Activated naive CD4-positive, alpha-beta T cell treated with anti-CD3 and anti-CD28 coated beads, Interleukin-2, amount 10 ng/mL, durations not matched to agents 7 days and 5 days (primary cell): ENCODE measurements at regions of chr15 and their contacts with region 1.

Region 1: DNA sequence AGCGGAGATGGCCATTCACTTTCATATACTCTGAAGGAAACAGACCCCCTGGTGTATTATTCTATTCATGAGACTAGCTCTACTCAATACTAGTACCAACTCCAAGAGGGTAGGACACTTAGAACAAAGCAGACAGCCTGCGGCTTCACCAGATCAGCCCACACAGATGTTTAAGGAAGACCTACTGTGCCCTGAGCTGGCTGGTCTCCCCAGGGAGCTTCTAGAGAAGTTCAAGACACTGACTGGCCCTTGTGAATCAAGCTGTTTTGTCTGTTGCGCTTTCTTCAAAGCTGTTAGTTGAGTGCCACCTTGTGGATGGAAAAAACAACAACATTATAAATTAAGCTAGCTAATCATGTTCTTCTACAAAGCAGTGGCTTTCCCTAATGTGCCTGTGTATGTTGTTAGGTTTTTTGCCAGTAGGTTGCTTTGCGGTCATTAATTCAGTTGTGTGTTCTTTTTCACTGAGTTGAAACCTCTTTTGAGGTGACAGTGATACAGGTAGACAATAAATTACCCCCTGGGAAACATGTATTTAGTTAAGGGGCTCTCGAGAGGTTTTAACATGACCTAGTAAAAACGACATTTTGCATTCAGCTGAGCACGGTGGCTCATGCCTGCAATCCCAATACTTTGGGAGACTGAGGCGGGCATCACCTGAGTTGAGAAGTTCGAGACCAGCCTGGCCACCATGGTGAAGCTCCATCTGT is 64.2 kb upstream of the MYZAP start:
- DNase-seq: peak; percentile 24
- H3K4me3 Mint-ChIP-seq: no peak overlapping the region
- H3K27ac Mint-ChIP-seq: no peak overlapping the region
- H3K4me1 Mint-ChIP-seq: no peaks in the 10 kb centered on the region
- H3K27me3 Mint-ChIP-seq: peaks cover 35% of the 10 kb centered on the region

Region 2: DNA sequence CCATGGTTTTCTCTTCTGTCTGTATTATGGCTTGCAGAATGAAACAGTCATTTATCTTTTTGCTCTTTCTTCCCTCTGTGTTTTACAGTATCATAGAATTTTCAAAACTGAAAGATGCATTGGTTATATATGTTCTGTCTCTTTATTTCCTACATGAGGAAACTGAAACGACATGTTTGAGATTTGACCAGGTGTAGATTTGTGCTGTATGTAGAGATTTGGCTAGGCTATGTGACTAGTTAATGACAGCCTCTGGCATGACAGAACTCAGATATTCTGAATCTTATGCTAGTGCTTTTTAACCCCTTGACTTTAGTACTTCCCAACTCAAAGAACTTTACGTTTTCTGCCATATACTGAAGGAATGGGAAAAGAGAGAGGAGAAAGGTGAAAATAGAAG is 458.1 kb before region 1 on chr15:
- CTCF ChIA-PET with region 1: no interaction called
- DNase-seq: no peak
- H3K4me3 Mint-ChIP-seq: no peak overlapping the region
- H3K27ac Mint-ChIP-seq: no peak overlapping the region
- H3K4me1 Mint-ChIP-seq: no peaks in the 10 kb centered on the region
- H3K27me3 Mint-ChIP-seq: no peaks in the 10 kb centered on the region

Region 3: GRCh38 chr15:57340682-57341259 is 186.8 kb before region 1 on chr15:
- CTCF ChIA-PET with region 1: interaction called, 93 read pairs
- DNase-seq: peak; percentile 51
- H3K4me3 Mint-ChIP-seq: no peak overlapping the region
- H3K27ac Mint-ChIP-seq: no peak overlapping the region
- H3K4me1 Mint-ChIP-seq: no peaks in the 10 kb centered on the region
- H3K27me3 Mint-ChIP-seq: peaks cover 23% of the 10 kb centered on the region

Region 4: GRCh38 chr15:57667171-57667849 is 139.8 kb after region 1 on chr15:
- CTCF ChIA-PET with region 1: no interaction called
- DNase-seq: no peak
- H3K4me3 Mint-ChIP-seq: no peak overlapping the region
- H3K27ac Mint-ChIP-seq: no peak overlapping the region
- H3K4me1 Mint-ChIP-seq: no peaks in the 10 kb centered on the region
- H3K27me3 Mint-ChIP-seq: peaks cover 25% of the 10 kb centered on the region